AG04450 (cell line): ENCODE measurements at regions of chr6 and their contacts with region 1.

Region 1: GRCh38 chr6:136317021-136317694 is 27.5 kb upstream of the BCLAF1 start:
- DNase-seq: peak; percentile 48
- H3K4me3 ChIP-seq: no peak overlapping the region
- H3K27ac ChIP-seq: no peak overlapping the region
- H3K27me3 ChIP-seq: peaks cover 3% of the 10 kb centered on the region
- CTCF ChIP-seq: peak; percentile 93

Region 2: DNA sequence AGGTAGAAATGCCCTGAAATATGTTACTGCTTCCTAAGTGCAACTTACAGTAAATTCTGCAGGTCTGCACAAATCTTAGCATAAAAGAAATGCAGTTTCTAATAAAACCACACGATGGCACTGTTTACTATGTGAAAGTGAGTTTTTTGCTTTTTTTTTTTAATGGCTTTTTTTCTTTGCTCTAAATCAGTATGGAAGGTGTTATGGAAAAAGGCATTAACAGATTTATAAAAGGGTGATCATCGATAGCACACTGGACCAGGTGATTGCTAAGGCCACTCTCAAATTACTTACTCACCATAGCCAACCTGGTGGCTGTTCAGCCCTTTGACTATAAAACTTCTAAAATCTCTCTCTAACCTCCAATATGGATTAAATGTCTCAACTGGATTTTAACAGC is 865.5 kb before region 1 on chr6:
- CTCF ChIA-PET with region 1: interaction called, 19 read pairs
- POLR2A ChIA-PET with region 1: no interaction called
- DNase-seq: no peak
- H3K4me3 ChIP-seq: no peak overlapping the region
- H3K27ac ChIP-seq: no peak overlapping the region
- H3K27me3 ChIP-seq: no peaks in the 10 kb centered on the region
- CTCF ChIP-seq: peak; percentile 63

Region 3: GRCh38 chr6:136306466-136306865 is 10.7 kb before region 1 on chr6:
- CTCF ChIA-PET with region 1: interaction called, 15 read pairs
- POLR2A ChIA-PET with region 1: no interaction called
- DNase-seq: no peak
- H3K4me3 ChIP-seq: no peak overlapping the region
- H3K27ac ChIP-seq: no peak overlapping the region
- H3K27me3 ChIP-seq: peaks cover 6% of the 10 kb centered on the region
- CTCF ChIP-seq: no peak